OCI-LY7 (cell line): ENCODE measurements at regions of chr3 and their contacts with region 1.

Region 1: GRCh38 chr3:179071550-179072397 is at the start of gene ZMAT3:
- DNase-seq: peak; percentile 82
- H3K4me3 ChIP-seq: peak within 1 kb of the TSS; percentile 92
- H3K27ac ChIP-seq: peak within 1 kb of the TSS; percentile 73
- H3K4me1 ChIP-seq: peaks cover 40% of the 10 kb centered on the region
- CTCF ChIP-seq: no peak
- total RNA-seq, gene ZMAT3: 3.7 TPM in 2 replicates

Region 2: GRCh38 chr3:178966299-178967176 is 105.2 kb before region 1 on chr3:
- CTCF ChIA-PET with region 1: no interaction called
- POLR2A ChIA-PET with region 1: no interaction called
- intact Hi-C with region 1: loop called (anchors 5 kb)
- DNase-seq: peak; percentile 62
- H3K4me3 ChIP-seq: peak overlapping the region; percentile 62
- H3K27ac ChIP-seq: peak overlapping the region; percentile 90
- H3K4me1 ChIP-seq: peaks cover 44% of the 10 kb centered on the region
- CTCF ChIP-seq: peak; percentile 89

Region 3: DNA sequence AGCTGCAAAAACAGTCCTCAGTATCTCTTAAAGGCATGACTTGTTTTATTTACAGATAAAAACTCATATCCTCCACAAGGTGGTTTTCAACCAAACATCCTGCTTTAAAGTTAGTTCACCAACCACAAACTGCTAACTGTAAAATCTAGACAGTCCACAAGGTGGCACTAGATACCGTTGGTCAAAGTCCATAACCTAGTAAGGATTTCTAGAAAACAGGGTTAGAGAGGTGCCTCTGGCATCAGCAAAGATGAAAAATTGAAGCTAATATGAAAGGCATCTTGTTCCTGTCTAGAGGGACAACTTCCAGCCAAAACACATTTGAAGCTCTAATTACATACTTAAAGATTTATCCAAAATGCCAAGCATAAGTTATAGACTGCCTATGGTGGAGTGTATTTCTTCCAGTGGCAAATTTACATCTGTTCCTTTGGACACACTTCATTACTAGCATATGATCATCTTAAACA is 56.2 kb before region 1 on chr3:
- CTCF ChIA-PET with region 1: interaction called, 7 read pairs
- POLR2A ChIA-PET with region 1: interaction called, 5 read pairs
- intact Hi-C with region 1: loop called (anchors 2 kb)
- DNase-seq: peak; percentile 86
- H3K4me3 ChIP-seq: no peak overlapping the region
- H3K27ac ChIP-seq: no peak overlapping the region
- H3K4me1 ChIP-seq: peaks cover 41% of the 10 kb centered on the region
- CTCF ChIP-seq: peak; percentile 97

Region 4: DNA sequence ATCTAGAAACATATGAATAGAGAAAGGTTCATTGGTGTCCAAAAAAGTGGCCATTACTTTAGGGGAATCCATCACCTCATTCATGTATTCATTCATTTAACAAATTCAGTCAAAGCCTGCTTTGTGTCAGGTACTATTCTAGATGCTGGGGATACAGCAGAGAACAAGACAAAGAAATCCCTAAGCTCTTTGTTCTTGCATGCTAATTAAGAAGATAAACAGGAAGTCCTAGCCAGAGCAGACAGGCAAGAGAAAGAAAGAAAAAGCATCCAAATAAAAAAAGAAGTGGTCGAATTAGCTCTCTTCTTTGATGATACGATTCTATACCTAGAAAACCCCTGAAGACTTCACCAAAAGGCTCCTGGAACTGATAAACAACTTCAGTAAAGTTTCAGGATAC is 12.2 kb after region 1 on chr3:
- CTCF ChIA-PET with region 1: no interaction called
- POLR2A ChIA-PET with region 1: interaction called, 17 read pairs
- intact Hi-C with region 1: no loop called
- DNase-seq: no peak
- H3K4me3 ChIP-seq: no peak overlapping the region
- H3K27ac ChIP-seq: no peak overlapping the region
- H3K4me1 ChIP-seq: peaks cover 8% of the 10 kb centered on the region
- CTCF ChIP-seq: no peak

Region 5: GRCh38 chr3:179133575-179133974 is 61.8 kb after region 1 on chr3:
- CTCF ChIA-PET with region 1: no interaction called
- POLR2A ChIA-PET with region 1: no interaction called
- intact Hi-C with region 1: no loop called
- DNase-seq: no peak
- H3K4me3 ChIP-seq: no peak overlapping the region
- H3K27ac ChIP-seq: no peak overlapping the region
- H3K4me1 ChIP-seq: no peaks in the 10 kb centered on the region
- CTCF ChIP-seq: no peak